Activated CD8-positive, alpha-beta T cell treated with anti-CD3 and anti-CD28 coated beads, Interleukin-2, amount 10 ng/mL, durations not matched to agents 7 days and 5 days (primary cell): ENCODE measurements at regions of chr14 and their contacts with region 1.

Region 1: DNA sequence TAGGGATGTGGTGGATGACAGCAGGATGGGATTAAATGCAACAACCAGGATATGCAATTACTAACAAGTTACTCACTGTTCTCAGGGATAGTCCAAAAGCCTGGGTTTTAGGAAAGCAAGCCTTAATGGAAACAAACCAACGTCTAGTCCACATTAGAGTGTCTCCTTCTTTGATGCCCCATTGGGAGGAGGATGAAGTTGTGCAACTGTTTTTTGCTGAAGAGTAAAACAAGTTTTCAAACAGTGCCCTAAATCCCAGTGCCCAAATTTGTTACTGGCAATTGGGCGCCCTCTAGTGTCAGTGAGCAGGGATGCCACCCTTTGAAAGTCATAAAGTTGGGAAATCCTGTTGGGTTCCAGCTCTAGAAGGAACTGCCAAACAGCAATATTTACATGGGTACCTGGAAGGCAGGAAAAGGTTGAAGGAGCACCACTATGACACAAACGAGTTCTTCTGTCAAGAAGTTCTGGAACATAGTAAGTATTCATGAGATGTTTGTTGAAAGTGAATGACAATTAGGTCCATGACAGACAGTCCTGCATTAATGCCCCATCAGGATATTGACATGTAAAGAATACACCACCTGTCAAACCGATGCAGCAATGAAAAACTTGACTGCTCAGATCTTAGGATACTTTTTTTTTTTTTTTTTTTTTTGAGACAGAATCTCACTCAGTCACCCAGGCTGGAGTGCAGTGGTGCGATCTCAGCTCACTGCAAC is 11.1 kb upstream of the DPF3 start:
- DNase-seq: peak; percentile 79
- ATAC-seq: peak; percentile 76
- H3K4me3 Mint-ChIP-seq: no peak overlapping the region
- H3K27ac Mint-ChIP-seq: no peak overlapping the region
- H3K4me1 Mint-ChIP-seq: peaks cover 17% of the 10 kb centered on the region
- H3K27me3 Mint-ChIP-seq: peaks cover 42% of the 10 kb centered on the region

Region 2: GRCh38 chr14:72532686-72533454 is 372.1 kb before region 1 on chr14:
- CTCF ChIA-PET with region 1: interaction called, 10 read pairs
- POLR2A ChIA-PET with region 1: no interaction called
- DNase-seq: no peak
- ATAC-seq: peak; percentile 63
- H3K4me3 Mint-ChIP-seq: no peak overlapping the region
- H3K27ac Mint-ChIP-seq: peak overlapping the region; percentile 77
- H3K4me1 Mint-ChIP-seq: peaks cover 92% of the 10 kb centered on the region
- H3K27me3 Mint-ChIP-seq: peaks cover 11% of the 10 kb centered on the region

Region 3: GRCh38 chr14:72883961-72884360 is 21.0 kb before region 1 on chr14:
- CTCF ChIA-PET with region 1: interaction called, 11 read pairs
- POLR2A ChIA-PET with region 1: no interaction called
- DNase-seq: peak; percentile 76
- ATAC-seq: peak; percentile 88
- H3K4me3 Mint-ChIP-seq: peak overlapping the region; percentile 16
- H3K27ac Mint-ChIP-seq: peak overlapping the region; percentile 45
- H3K4me1 Mint-ChIP-seq: peaks cover 66% of the 10 kb centered on the region
- H3K27me3 Mint-ChIP-seq: peaks cover 20% of the 10 kb centered on the region

Region 4: GRCh38 chr14:72893636-72894321 is 11.2 kb before region 1 on chr14 and contains the start of gene DPF3:
- CTCF ChIA-PET with region 1: interaction called, 24 read pairs
- POLR2A ChIA-PET with region 1: interaction called, 3 read pairs
- DNase-seq: peak; percentile 97
- ATAC-seq: peak; percentile 98
- H3K4me3 Mint-ChIP-seq: peak within 1 kb of the TSS; percentile 97
- H3K27ac Mint-ChIP-seq: peak within 1 kb of the TSS; percentile 76
- H3K4me1 Mint-ChIP-seq: peaks cover 37% of the 10 kb centered on the region
- H3K27me3 Mint-ChIP-seq: peaks cover 56% of the 10 kb centered on the region
- total RNA-seq, gene DPF3: 10.3 to 10.7 TPM